Activated naive CD4-positive, alpha-beta T cell treated with anti-CD3 and anti-CD28 coated beads for 36 hours (primary cell): ENCODE measurements at regions of chr9 and their contacts with region 1.

Region 1: GRCh38 chr9:97109194-97109811 is 70.4 kb upstream of the CTSV start:
- DNase-seq: peak; percentile 77
- H3K4me3 Mint-ChIP-seq: no peak overlapping the region
- H3K27ac Mint-ChIP-seq: no peak overlapping the region
- H3K4me1 Mint-ChIP-seq: no peaks in the 10 kb centered on the region
- H3K27me3 Mint-ChIP-seq: no peaks in the 10 kb centered on the region

Region 2: GRCh38 chr9:96619491-96620154 is 489.7 kb before region 1 on chr9 and contains the start of gene CDC14B:
- CTCF ChIA-PET with region 1: no interaction called
- intact Hi-C with region 1: no loop called
- DNase-seq: peak; percentile 87
- H3K4me3 Mint-ChIP-seq: peak within 1 kb of the TSS; percentile 76
- H3K27ac Mint-ChIP-seq: no peak within 1 kb of the TSS
- H3K4me1 Mint-ChIP-seq: peaks cover 4% of the 10 kb centered on the region
- H3K27me3 Mint-ChIP-seq: peaks cover 35% of the 10 kb centered on the region
- total RNA-seq, gene CDC14B: 0.62 to 0.89 TPM

Region 3: GRCh38 chr9:96875461-96876364 is 233.6 kb before region 1 on chr9:
- CTCF ChIA-PET with region 1: no interaction called
- intact Hi-C with region 1: loop called (anchors 1 kb)
- DNase-seq: peak; percentile 63
- H3K4me3 Mint-ChIP-seq: peak overlapping the region; percentile 77
- H3K27ac Mint-ChIP-seq: peak overlapping the region; percentile 77
- H3K4me1 Mint-ChIP-seq: peaks cover 25% of the 10 kb centered on the region
- H3K27me3 Mint-ChIP-seq: peaks cover 42% of the 10 kb centered on the region